Activated T-helper 2 cell treated with anti-CD3 and anti-CD28 coated beads, Interferon-gamma antibody, Interleukin-2, Interleukin-4, amounts not matched to agents 10 μg/mL and 5 μg/mL and 100 μg/mL, durations not matched to agents 14 hours and 24 hours and 36 hours (primary cell): ENCODE measurements at regions of chr4 and their contacts with region 1.

Region 1: GRCh38 chr4:122827879-122828601 is 1.4 kb downstream of the FGF2 start:
- DNase-seq: no peak
- H3K4me3 Mint-ChIP-seq: peak overlapping the region; percentile 85
- H3K27ac Mint-ChIP-seq: peak overlapping the region; percentile 61
- H3K4me1 Mint-ChIP-seq: peaks cover 18% of the 10 kb centered on the region
- H3K27me3 Mint-ChIP-seq: peaks cover 76% of the 10 kb centered on the region

Region 2: GRCh38 chr4:122602277-122603142 is 225.5 kb before region 1 on chr4:
- intact Hi-C with region 1: loop called (anchors 5 kb)
- DNase-seq: no peak
- H3K4me3 Mint-ChIP-seq: peak overlapping the region; percentile 35
- H3K27ac Mint-ChIP-seq: peak overlapping the region; percentile 31
- H3K4me1 Mint-ChIP-seq: peaks cover 18% of the 10 kb centered on the region
- H3K27me3 Mint-ChIP-seq: peaks cover 16% of the 10 kb centered on the region

Region 3: DNA sequence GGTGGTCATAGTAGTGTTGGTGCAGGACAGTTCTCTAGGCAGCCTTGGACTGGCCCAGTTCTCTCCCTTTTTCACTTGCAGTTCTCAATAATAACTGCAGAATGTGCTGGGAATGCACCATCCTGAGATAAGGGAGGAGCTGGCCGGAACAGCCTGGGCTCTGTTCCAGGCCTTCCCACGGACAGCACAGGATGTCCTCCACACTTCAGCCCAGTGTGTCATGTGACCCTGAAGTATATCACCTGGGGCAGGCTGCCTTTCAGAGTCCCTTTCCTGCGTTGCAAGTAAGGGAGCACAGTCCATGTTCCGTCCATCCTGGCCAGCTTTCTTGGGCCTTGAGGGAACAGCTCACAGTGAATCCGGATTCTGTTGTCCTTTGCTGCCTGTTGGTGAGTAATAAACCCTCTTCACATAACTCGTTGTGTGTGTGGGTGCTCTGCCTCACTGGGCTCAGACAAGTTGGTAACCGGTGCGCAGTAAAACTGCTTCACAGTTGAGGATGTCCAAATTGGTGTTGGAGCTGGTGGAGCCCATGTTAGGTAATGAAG is 127.8 kb before region 1 on chr4:
- intact Hi-C with region 1: no loop called
- DNase-seq: no peak
- H3K4me3 Mint-ChIP-seq: peak overlapping the region; percentile 78
- H3K27ac Mint-ChIP-seq: peak overlapping the region; percentile 79
- H3K4me1 Mint-ChIP-seq: peaks cover 51% of the 10 kb centered on the region
- H3K27me3 Mint-ChIP-seq: peaks cover 11% of the 10 kb centered on the region

Region 4: DNA sequence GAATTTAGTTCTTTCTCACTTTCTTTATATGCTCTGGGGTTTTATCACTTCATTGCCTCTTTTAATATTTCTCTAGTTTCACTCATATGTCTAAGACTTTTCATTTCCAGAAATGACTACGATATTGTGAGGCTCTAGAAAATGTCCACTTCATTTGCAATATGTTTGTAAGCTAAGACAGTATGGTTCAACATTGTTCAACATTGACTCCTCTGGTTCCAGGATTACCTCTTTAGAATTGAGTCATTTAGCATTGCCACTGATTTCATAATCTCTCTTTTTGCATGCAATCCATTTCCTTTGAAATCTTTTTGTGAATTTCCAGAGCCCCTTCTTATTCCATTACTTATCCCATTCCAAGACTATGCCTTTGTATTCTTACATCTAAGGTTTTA is 63.2 kb before region 1 on chr4:
- intact Hi-C with region 1: loop called (anchors 1 kb)
- DNase-seq: no peak
- H3K4me3 Mint-ChIP-seq: no peak overlapping the region
- H3K27ac Mint-ChIP-seq: peak overlapping the region; percentile 56
- H3K4me1 Mint-ChIP-seq: peaks cover 22% of the 10 kb centered on the region
- H3K27me3 Mint-ChIP-seq: no peaks in the 10 kb centered on the region

Region 5: GRCh38 chr4:122775039-122775438 is 53.0 kb before region 1 on chr4:
- intact Hi-C with region 1: no loop called
- DNase-seq: no peak
- H3K4me3 Mint-ChIP-seq: no peak overlapping the region
- H3K27ac Mint-ChIP-seq: no peak overlapping the region
- H3K4me1 Mint-ChIP-seq: no peaks in the 10 kb centered on the region
- H3K27me3 Mint-ChIP-seq: no peaks in the 10 kb centered on the region

Region 6: DNA sequence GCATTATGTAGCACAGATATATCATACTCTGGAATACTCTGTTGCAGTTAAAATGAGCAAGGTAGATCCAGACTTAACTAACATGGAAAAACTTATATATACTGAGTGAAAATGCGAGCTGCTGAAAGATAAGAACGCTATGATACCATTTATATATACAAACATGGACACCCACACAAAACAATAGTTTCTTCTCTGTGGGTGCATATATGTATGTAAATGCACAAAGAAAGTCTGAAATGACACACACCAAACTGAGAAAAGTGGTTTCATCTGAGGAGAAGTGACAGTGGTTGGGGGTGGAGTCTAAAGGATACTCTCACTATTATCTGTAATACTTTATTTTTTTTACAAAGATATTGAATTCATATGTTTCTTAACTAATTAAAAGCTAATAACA is 13.6 kb before region 1 on chr4:
- intact Hi-C with region 1: loop called (anchors 1 kb)
- DNase-seq: no peak
- H3K4me3 Mint-ChIP-seq: no peak overlapping the region
- H3K27ac Mint-ChIP-seq: no peak overlapping the region
- H3K4me1 Mint-ChIP-seq: peaks cover 9% of the 10 kb centered on the region
- H3K27me3 Mint-ChIP-seq: peaks cover 23% of the 10 kb centered on the region

Region 7: GRCh38 chr4:122865425-122865824 is 37.4 kb after region 1 on chr4:
- intact Hi-C with region 1: no loop called
- DNase-seq: no peak
- H3K4me3 Mint-ChIP-seq: no peak overlapping the region
- H3K27ac Mint-ChIP-seq: no peak overlapping the region
- H3K4me1 Mint-ChIP-seq: peaks cover 4% of the 10 kb centered on the region
- H3K27me3 Mint-ChIP-seq: peaks cover 28% of the 10 kb centered on the region

Region 8: DNA sequence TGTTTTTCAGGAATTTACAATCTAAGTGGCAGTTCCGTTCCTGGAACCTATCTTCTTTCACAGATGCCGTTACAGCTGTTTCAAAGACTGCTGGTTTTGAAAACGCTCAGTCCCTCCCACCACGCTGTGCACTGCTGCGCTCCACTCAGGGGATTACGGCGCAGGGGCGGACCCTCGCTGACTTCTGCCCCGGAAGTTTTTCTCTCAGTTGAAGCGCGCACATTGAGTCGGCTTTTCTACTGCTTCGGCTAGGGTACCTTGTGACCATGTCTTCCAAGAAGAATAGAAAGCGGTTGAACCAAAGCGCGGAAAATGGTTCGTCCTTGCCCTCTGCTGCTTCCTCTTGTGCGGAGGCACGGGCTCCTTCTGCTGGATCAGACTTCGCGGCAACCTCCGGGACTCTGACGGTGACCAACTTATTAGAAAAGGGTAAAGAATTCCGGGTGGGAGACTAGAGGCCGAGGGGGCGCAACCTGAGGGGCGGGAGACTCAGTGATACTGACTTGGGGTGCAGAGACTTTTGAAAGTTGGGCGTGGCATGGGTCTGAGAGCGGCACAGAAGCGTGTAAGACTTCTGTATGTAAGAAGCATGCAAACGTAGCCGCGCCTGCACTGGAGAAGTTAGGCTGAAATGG is 95.0 kb after region 1 on chr4:
- intact Hi-C with region 1: loop called (anchors 1 kb)
- DNase-seq: peak; percentile 88
- H3K4me3 Mint-ChIP-seq: peak overlapping the region; percentile 95
- H3K27ac Mint-ChIP-seq: peak overlapping the region; percentile 97
- H3K4me1 Mint-ChIP-seq: peaks cover 15% of the 10 kb centered on the region
- H3K27me3 Mint-ChIP-seq: no peaks in the 10 kb centered on the region